ENCODE measurements at regions of chr14 and their contacts with region 1.

Region 1: GRCh38 chr14:106530423-106531107 is 1004.2 kb downstream of the TMEM121 start:
- DNase-seq: peak; percentile 79
- ATAC-seq: peak; percentile 96
- H3K4me3 Mint-ChIP-seq: no peak overlapping the region
- H3K27ac Mint-ChIP-seq: no peak overlapping the region
- H3K4me1 Mint-ChIP-seq: peaks cover 3% of the 10 kb centered on the region
- H3K27me3 Mint-ChIP-seq: peaks cover 5% of the 10 kb centered on the region
- CTCF ChIP-seq: peak; percentile 76

Region 2: DNA sequence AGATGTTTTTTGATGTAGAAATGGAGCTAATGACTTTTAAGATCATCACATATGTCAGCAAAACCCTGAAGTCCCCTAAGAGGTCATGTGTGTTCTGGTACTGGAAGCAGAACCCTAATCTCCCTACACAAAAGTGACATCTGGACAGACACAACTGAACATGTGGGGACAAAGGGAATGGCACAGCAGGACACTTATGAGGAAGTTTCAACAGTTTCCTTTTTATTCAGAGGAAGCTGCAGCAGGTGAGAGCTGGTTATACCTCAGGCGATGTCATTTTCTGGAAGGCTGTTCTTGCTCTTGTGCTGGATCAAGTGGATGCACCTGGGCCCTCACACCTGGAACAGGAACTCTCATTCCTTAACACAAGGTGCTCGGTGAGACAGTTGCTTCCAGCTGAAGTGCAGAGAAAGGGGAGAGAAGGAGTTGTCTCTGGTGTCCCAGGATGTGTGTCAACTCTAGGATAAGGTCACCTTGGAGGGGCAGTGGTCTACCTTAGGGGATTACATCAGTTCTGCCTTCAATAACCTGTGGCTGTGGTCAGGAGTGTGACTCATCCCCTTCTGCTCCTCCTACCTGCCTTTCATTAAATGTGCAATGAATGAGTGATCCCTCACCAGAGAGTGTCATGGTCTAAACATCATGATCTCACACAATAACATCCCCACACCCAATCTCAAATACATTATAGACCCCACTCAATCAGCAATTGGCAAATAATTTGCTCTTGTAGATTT is 540.8 kb before region 1 on chr14:
- CTCF ChIA-PET with region 1: no interaction called
- POLR2A ChIA-PET with region 1: no interaction called
- intact Hi-C with region 1: no loop called
- DNase-seq: peak; percentile 86
- ATAC-seq: peak; percentile 75
- H3K4me3 Mint-ChIP-seq: no peak overlapping the region
- H3K27ac Mint-ChIP-seq: peak overlapping the region; percentile 78
- H3K4me1 Mint-ChIP-seq: peaks cover 76% of the 10 kb centered on the region
- H3K27me3 Mint-ChIP-seq: no peaks in the 10 kb centered on the region
- CTCF ChIP-seq: no peak

Region 3: DNA sequence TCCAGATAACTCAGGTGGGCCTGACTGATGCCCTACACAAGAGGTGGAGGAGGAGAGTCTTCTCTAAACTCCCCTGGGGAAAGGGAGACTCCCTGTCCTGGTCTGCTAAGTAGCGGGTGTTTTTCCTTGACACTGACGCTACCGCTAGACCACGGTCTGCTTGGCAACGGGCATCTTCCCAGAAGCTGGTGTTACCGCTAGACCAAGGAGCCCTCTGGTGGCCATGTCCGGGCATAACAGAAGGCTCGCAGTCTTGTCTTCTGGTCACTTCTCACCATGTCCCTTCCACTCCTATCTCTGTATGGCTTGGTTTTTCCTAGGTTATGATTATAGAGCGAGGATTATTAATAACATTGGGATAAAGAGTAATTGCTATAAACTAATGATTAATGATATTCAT is 38.7 kb before region 1 on chr14:
- CTCF ChIA-PET with region 1: interaction called, 31 read pairs
- POLR2A ChIA-PET with region 1: no interaction called
- intact Hi-C with region 1: no loop called
- DNase-seq: peak; percentile 60
- ATAC-seq: no peak
- H3K4me3 Mint-ChIP-seq: no peak overlapping the region
- H3K27ac Mint-ChIP-seq: no peak overlapping the region
- H3K4me1 Mint-ChIP-seq: peaks cover 20% of the 10 kb centered on the region
- H3K27me3 Mint-ChIP-seq: no peaks in the 10 kb centered on the region
- CTCF ChIP-seq: peak; percentile 58

Region 4: DNA sequence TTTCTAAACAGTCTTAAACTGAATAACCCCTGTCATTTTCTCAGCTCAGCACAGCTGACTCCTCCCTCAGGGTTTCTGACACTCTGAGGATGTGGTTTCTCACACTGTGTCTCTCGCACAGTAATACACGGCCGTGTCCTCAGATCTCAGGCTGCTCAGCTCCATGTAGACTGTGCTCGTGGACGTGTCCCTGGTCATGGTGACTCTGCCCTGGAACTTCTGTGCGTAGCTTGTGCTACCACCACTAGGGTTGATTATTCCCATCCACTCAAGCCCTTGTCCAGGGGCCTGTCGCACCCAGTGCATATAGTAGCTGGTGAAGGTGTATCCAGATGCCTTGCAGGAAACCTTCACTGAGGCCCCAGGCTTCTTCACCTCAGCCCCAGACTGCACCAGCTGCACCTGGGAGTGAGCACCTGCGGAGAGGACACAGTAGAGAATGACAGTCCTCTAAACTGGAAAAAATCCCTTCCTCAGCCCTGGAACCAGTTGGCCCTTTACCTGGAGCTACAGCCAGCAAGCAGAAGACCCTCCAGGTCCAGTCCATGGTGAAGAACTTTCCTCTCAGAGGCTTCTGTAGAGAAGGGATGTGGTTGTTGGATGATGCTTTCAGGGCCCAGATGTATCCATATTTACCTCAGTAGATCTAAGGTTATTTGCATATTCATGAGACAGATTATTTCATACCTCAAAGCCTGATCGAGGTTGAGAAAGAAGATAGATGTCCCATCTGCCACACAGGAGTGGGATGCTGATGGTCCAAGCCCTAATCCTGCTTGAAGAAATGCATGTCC is 19.4 kb before region 1 on chr14:
- CTCF ChIA-PET with region 1: interaction called, 51 read pairs
- POLR2A ChIA-PET with region 1: interaction called, 3 read pairs
- intact Hi-C with region 1: no loop called
- DNase-seq: peak; percentile 71
- ATAC-seq: peak; percentile 68
- H3K4me3 Mint-ChIP-seq: peak overlapping the region; percentile 18
- H3K27ac Mint-ChIP-seq: peak overlapping the region; percentile 62
- H3K4me1 Mint-ChIP-seq: peaks cover 68% of the 10 kb centered on the region
- H3K27me3 Mint-ChIP-seq: no peaks in the 10 kb centered on the region
- CTCF ChIP-seq: no peak

Region 5: GRCh38 chr14:106518054-106518943 is 12.3 kb before region 1 on chr14:
- CTCF ChIA-PET with region 1: interaction called, 84 read pairs
- POLR2A ChIA-PET with region 1: interaction called, 3 read pairs
- intact Hi-C with region 1: no loop called
- DNase-seq: peak; percentile 94
- ATAC-seq: peak; percentile 75
- H3K4me3 Mint-ChIP-seq: no peak overlapping the region
- H3K27ac Mint-ChIP-seq: no peak overlapping the region
- H3K4me1 Mint-ChIP-seq: peaks cover 11% of the 10 kb centered on the region
- H3K27me3 Mint-ChIP-seq: peaks cover 2% of the 10 kb centered on the region
- CTCF ChIP-seq: peak; percentile 91

Region 6: GRCh38 chr14:106556665-106557289 is 26.2 kb after region 1 on chr14:
- CTCF ChIA-PET with region 1: interaction called, 35 read pairs
- POLR2A ChIA-PET with region 1: no interaction called
- intact Hi-C with region 1: no loop called
- DNase-seq: peak; percentile 88
- ATAC-seq: peak; percentile 77
- H3K4me3 Mint-ChIP-seq: no peak overlapping the region
- H3K27ac Mint-ChIP-seq: no peak overlapping the region
- H3K4me1 Mint-ChIP-seq: no peaks in the 10 kb centered on the region
- H3K27me3 Mint-ChIP-seq: peaks cover 2% of the 10 kb centered on the region
- CTCF ChIP-seq: peak; percentile 94

Region 7: GRCh38 chr14:106564058-106564656 is 33.6 kb after region 1 on chr14:
- CTCF ChIA-PET with region 1: interaction called, 35 read pairs
- POLR2A ChIA-PET with region 1: no interaction called
- intact Hi-C with region 1: no loop called
- DNase-seq: peak; percentile 85
- ATAC-seq: peak; percentile 80
- H3K4me3 Mint-ChIP-seq: no peak overlapping the region
- H3K27ac Mint-ChIP-seq: no peak overlapping the region
- H3K4me1 Mint-ChIP-seq: no peaks in the 10 kb centered on the region
- H3K27me3 Mint-ChIP-seq: peaks cover 12% of the 10 kb centered on the region
- CTCF ChIP-seq: peak; percentile 97

Region 8: GRCh38 chr14:106605548-106606448 is 75.2 kb after region 1 on chr14:
- CTCF ChIA-PET with region 1: interaction called, 15 read pairs
- POLR2A ChIA-PET with region 1: no interaction called
- intact Hi-C with region 1: no loop called
- DNase-seq: peak; percentile 94
- ATAC-seq: peak; percentile 100
- H3K4me3 Mint-ChIP-seq: no peak overlapping the region
- H3K27ac Mint-ChIP-seq: no peak overlapping the region
- H3K4me1 Mint-ChIP-seq: no peaks in the 10 kb centered on the region
- H3K27me3 Mint-ChIP-seq: peaks cover 20% of the 10 kb centered on the region
- CTCF ChIP-seq: peak; percentile 75

Region 9: GRCh38 chr14:106790189-106791036 is 259.8 kb after region 1 on chr14:
- CTCF ChIA-PET with region 1: no interaction called
- POLR2A ChIA-PET with region 1: no interaction called
- intact Hi-C with region 1: no loop called
- DNase-seq: peak; percentile 92
- ATAC-seq: peak; percentile 92
- H3K4me3 Mint-ChIP-seq: no peak overlapping the region
- H3K27ac Mint-ChIP-seq: no peak overlapping the region
- H3K4me1 Mint-ChIP-seq: peaks cover 8% of the 10 kb centered on the region
- H3K27me3 Mint-ChIP-seq: peaks cover 4% of the 10 kb centered on the region
- CTCF ChIP-seq: peak; percentile 90